ENCODE measurements at regions of chr19 and their contacts with region 1.

Region 1: DNA sequence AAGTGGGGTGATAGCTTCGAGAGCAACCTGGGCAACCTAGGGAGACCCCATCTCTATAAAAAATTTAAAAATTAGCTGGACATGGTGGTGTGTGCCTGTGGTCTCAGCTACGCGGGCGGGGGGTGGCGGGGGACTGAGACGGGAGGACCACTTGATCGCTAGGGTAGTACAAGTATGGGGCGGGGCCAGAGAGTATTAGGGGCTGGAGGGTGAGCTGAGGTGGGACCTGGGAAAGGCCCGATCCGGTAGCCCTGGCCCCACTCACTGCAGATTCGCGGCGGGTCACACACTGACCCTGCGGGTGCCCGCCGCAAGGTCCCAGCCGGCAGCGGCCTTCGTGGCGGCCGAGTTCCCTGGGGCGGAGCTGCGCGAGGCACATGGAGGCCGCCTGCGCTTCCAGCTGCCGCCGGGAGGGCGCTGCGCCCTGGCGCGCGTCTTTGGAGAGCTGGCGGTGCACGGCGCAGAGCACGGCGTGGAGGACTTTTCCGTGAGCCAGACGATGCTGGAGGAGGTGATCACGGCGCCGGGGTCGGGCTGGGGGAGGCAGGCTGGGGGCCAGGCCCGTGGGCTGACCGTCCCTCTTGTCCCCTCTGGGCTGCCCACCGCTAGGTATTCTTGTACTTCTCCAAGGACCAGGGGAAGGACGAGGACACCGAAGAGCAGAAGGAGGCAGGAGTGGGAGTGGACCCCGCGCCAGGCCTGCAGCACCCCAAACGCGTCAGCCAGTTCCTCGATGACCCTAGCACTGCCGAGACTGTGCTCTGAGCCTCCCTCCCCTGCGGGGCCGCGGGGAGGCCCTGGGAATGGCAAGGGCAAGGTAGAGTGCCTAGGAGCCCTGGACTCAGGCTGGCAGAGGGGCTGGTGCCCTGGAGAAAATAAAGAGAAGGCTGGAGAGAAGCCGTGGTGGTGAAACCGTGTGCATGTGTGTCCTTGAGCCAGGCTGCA is 2.0 kb upstream of the ARHGAP45 start:
- DNase-seq: peak; percentile 72
- H3K4me3 Mint-ChIP-seq: no peak overlapping the region
- H3K27ac Mint-ChIP-seq: no peak overlapping the region
- H3K4me1 Mint-ChIP-seq: peaks cover 30% of the 10 kb centered on the region
- H3K27me3 Mint-ChIP-seq: no peaks in the 10 kb centered on the region

Region 2: GRCh38 chr19:1082172-1082927 is 17.4 kb after region 1 on chr19:
- CTCF ChIA-PET with region 1: interaction called, 24 read pairs
- intact Hi-C with region 1: loop called (anchors 1 kb)
- DNase-seq: peak; percentile 92
- H3K4me3 Mint-ChIP-seq: no peak overlapping the region
- H3K27ac Mint-ChIP-seq: peak overlapping the region; percentile 24
- H3K4me1 Mint-ChIP-seq: peaks cover 54% of the 10 kb centered on the region
- H3K27me3 Mint-ChIP-seq: no peaks in the 10 kb centered on the region

Region 3: DNA sequence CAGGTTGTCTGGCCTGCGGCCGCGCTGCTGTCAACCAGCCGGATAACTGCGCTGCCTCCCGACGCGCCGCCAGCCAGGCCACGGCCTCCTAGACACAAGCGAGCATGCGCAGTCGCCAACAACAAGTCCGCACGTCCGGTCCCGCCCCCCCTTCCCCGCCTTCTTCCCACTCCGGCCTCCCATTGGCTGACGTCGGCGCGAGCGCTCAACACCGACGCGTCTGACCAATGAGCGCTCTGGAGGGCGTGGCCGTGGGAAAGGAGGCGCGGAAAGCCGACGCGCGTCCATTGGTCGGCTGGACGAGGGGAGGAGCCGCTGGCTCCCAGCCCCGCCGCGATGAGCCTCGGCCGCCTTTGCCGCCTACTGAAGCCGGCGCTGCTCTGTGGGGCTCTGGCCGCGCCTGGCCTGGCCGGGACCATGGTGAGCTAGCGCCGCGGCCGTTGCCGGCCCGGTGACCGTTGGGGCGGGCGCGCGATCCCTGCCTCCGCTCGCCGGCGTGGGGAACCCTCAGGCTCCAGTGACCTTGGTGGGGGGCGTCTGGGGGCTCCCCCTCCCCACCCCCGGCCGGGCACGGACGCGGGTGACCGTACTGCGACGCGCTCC is 38.9 kb after region 1 on chr19 and contains the start of gene GPX4:
- CTCF ChIA-PET with region 1: no interaction called
- intact Hi-C with region 1: loop called (anchors 2 kb)
- DNase-seq: peak; percentile 99
- H3K4me3 Mint-ChIP-seq: peak within 1 kb of the TSS; percentile 72
- H3K27ac Mint-ChIP-seq: peak within 1 kb of the TSS; percentile 79
- H3K4me1 Mint-ChIP-seq: peaks cover 54% of the 10 kb centered on the region
- H3K27me3 Mint-ChIP-seq: no peaks in the 10 kb centered on the region
- total RNA-seq, gene GPX4: 244 to 253 TPM

Region 4: DNA sequence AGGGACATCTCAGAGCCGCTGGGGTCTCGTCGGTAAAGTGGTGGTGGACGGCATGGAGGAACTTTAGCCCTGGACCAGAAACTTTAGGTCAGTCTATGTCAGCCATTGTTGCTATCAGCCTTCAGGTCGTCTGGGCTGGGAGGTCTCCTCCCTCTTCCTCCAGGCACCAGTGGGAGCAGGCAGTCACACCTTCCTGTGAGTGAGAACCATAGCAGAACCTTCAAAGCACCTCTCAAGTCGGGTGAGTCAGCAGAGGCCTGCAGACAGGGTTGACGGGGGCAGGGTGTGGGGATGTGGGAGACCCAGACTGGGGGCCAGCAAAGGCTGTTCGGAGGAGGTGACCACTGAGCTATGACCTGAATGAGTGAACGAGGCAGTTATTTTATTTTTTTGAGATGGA is 124.5 kb after region 1 on chr19:
- CTCF ChIA-PET with region 1: interaction called, 5 read pairs
- intact Hi-C with region 1: loop called (anchors 5 kb)
- DNase-seq: peak; percentile 87
- H3K4me3 Mint-ChIP-seq: no peak overlapping the region
- H3K27ac Mint-ChIP-seq: peak overlapping the region; percentile 63
- H3K4me1 Mint-ChIP-seq: peaks cover 30% of the 10 kb centered on the region
- H3K27me3 Mint-ChIP-seq: no peaks in the 10 kb centered on the region

Measured in activated naive CD4-positive, alpha-beta T cell treated with anti-CD3 and anti-CD28 coated beads for 36 hours (primary cell).